ENCODE measurements at regions of chr2 and their contacts with region 1.

Region 1: DNA sequence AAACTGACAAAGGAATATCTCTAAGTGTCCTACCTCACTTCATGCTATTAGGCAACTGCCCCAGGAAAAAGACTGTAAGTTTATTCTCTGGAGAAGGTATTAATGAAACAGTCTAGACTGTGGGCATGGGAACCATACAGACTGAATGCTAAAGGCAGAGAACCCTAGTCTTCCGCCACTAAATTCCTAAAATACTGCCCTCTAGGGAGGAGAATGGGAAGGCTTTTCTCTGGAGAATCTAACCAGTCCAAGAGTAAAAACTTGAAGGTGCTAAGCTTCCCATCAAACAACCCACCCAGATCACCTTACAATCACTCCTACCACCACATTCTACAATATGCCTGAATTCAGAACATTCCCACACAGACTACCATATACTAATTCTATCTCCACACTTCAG is 3.4 kb downstream of the SRBD1 start:
- DNase-seq: no peak
- H3K4me3 ChIP-seq: no peak overlapping the region
- H3K27ac ChIP-seq: no peak overlapping the region
- H3K4me1 ChIP-seq: no peaks in the 10 kb centered on the region
- H3K27me3 ChIP-seq: no peaks in the 10 kb centered on the region
- CTCF ChIP-seq: no peak
- POLR2A ChIP-seq: no peak

Region 2: GRCh38 chr2:47069628-47070154 is 1462.0 kb after region 1 on chr2:
- intact Hi-C with region 1: loop called (anchors 5 kb)
- DNase-seq: peak; percentile 87 to 96
- H3K4me3 ChIP-seq: no peak overlapping the region
- H3K27ac ChIP-seq: peak overlapping the region; percentile 94 to 97
- H3K4me1 ChIP-seq: peaks cover 27 to 28% of the 10 kb centered on the region in 2 donors
- H3K27me3 ChIP-seq: no peaks in the 10 kb centered on the region
- CTCF ChIP-seq: no peak
- POLR2A ChIP-seq: no peak

Measured in breast epithelium (tissue), 4 donors.